ENCODE measurements at regions of chr3 and their contacts with region 1.

Region 1: DNA sequence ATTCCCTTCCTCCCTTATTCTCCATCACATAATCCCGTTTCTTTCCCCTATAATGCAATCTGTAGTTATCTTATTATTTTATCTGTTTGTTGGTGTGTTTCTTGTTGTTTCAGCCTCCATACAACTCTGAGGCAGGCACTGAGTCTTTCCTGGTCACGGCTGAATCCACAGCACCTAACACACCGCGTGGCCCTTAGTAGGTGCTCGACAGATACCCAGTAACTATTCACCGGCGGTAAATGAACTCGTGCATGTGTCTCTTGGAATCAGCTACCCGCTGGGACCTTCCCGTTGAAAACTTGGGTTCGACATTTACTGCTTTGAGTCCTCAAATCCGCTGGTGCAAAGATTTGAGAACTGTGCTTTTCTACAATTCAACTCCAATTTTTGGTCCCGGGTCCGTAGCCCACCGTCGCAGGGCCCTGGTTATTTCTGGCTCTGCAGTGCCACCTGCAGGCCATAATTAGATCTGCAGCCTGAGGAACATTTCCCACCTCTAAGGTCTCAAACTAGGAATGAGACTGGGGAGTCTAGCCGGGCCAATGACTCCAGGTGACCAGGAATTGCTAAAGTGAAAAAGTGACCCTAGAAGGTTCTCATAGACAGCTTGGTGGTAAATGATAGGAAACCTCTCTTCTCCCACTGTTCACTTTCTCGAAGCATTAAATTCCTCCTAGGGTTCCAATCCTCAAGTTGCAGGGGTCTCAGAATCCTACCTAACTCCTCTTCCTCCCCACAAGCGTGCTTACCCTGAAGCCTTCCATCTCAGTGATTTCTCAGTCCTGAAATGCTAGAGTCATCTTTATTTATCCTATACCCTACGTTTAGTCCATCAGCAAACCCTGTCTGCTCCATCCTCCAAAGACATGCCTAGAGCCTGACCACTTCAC is 40.0 kb upstream of the TRH start:
- DNase-seq: peak; percentile 26 to 46 (median 32)
- ATAC-seq: peak; percentile 60
- H3K4me3 ChIP-seq: no peak overlapping the region
- H3K27ac ChIP-seq: no peak overlapping the region
- H3K4me1 ChIP-seq: peaks cover 5% of the 10 kb centered on the region
- H3K27me3 ChIP-seq: no peaks in the 10 kb centered on the region
- CTCF ChIP-seq: peak; percentile 80 to 91 (median 86)
- POLR2A ChIP-seq: no peak

Region 2: DNA sequence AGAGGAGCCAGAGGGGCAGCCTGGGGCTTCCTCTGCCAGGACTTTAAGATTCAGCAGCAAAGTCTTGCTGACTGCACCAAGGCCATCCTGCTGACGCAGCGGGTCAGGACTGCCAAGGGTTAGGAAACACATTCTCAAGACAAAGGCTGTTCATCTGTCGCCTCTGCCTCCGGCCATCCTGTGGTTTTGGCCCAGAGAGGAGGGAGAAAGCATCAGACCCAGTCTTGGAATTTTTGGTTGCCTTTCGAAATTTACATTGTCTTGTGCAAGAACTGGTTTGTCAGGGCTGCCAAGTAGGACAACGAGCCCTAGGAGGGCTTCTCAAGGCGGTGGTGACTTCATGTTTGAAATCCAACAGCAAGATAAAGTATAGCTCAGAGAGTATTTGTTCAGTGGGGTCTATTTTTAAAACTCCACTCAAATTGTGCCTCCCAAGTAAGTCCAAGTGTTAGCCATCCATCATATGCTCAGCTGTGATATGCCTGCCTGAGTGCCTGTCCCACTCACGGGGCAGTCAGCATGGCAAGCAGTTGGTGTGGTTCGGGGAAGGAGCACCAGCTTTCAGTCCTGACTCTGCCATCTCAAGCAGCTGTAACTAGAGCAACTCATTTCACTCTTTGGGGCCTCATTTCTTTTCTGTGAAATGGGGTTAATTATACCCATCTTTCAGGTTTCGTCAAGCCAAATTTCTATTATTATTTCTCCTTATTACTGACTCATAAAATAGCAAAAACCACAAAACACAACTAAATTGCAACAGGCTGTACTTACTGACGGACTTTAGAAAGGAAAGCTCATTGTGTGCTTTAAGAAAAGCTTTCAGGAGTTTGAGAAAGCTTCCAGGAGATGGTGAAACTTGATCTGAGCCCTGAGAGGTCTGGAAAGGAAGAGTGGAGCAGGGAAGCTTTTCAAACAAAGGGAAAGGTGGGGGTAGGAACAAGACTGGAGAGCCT is 448.5 kb before region 1 on chr3:
- intact Hi-C with region 1: loop called (anchors 5 kb)
- DNase-seq: peak; percentile 48 to 85 (median 58)
- ATAC-seq: peak; percentile 54
- H3K4me3 ChIP-seq: no peak overlapping the region
- H3K27ac ChIP-seq: peak overlapping the region in 2 of 4 donors; percentile 26 to 64
- H3K4me1 ChIP-seq: peaks cover 6% of the 10 kb centered on the region
- H3K27me3 ChIP-seq: no peaks in the 10 kb centered on the region
- CTCF ChIP-seq: no peak
- POLR2A ChIP-seq: no peak

Region 3: GRCh38 chr3:129627429-129628168 is 306.9 kb before region 1 on chr3:
- intact Hi-C with region 1: loop called (anchors 5 kb)
- DNase-seq: peak; percentile 70 to 78 (median 74)
- ATAC-seq: peak; percentile 55
- H3K4me3 ChIP-seq: peak overlapping the region; percentile 28 to 46
- H3K27ac ChIP-seq: peak overlapping the region; percentile 86 to 97 (median 94)
- H3K4me1 ChIP-seq: peaks cover 53% of the 10 kb centered on the region
- H3K27me3 ChIP-seq: no peaks in the 10 kb centered on the region
- CTCF ChIP-seq: peak; percentile 51 to 91 (median 90)
- POLR2A ChIP-seq: peak in 1 of 3 donors; percentile 36

Region 4: DNA sequence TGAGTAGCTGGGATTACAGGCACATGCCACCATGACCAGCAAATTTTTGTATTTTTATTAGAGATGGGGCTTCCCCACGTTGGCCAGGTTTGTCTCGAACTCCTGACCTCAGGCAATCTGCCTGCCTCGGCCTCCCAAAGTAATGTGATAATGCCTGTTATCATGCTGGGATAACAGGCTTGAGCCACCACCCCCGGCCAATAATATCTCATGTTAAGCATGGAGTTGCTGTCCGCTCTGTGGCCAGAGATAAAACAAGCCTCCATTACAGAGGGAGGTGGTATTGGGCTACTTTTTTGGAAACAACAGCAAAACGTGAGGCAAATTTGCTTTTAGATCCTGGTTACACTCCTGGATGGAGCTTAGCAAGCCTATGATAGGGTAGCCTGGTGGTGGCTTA is 114.2 kb after region 1 on chr3:
- intact Hi-C with region 1: no loop called
- DNase-seq: no peak
- ATAC-seq: no peak
- H3K4me3 ChIP-seq: no peak overlapping the region
- H3K27ac ChIP-seq: no peak overlapping the region
- H3K4me1 ChIP-seq: no peaks in the 10 kb centered on the region
- H3K27me3 ChIP-seq: no peaks in the 10 kb centered on the region
- CTCF ChIP-seq: no peak
- POLR2A ChIP-seq: no peak

Region 5: GRCh38 chr3:130111185-130111864 is 176.8 kb after region 1 on chr3:
- intact Hi-C with region 1: loop called (anchors 10 kb)
- DNase-seq: peak; percentile 99 to 100 (median 100)
- ATAC-seq: peak; percentile 100
- H3K4me3 ChIP-seq: peak overlapping the region; percentile 80 to 90
- H3K27ac ChIP-seq: peak overlapping the region; percentile 16 to 85 (median 70)
- H3K4me1 ChIP-seq: peaks cover 15% of the 10 kb centered on the region
- H3K27me3 ChIP-seq: no peaks in the 10 kb centered on the region
- CTCF ChIP-seq: no peak
- POLR2A ChIP-seq: peak in 2 of 3 donors; percentile 23 to 43

Measured in body of pancreas (tissue), 4 donors.